ENCODE measurements at regions of chr12 and their contacts with region 1.

Region 1: GRCh38 chr12:46268590-46269558 is at the start of gene SLC38A1:
- DNase-seq: peak; percentile 93
- ATAC-seq: peak; percentile 73
- H3K4me3 Mint-ChIP-seq: no peak within 1 kb of the TSS
- H3K27ac Mint-ChIP-seq: no peak within 1 kb of the TSS
- H3K4me1 Mint-ChIP-seq: peaks cover 31% of the 10 kb centered on the region
- H3K27me3 Mint-ChIP-seq: no peaks in the 10 kb centered on the region
- total RNA-seq, gene SLC38A1: 162 to 168 TPM

Region 2: GRCh38 chr12:45990468-45991283 is 278.2 kb before region 1 on chr12 and contains the start of gene SCAF11:
- CTCF ChIA-PET with region 1: interaction called, 3 read pairs
- POLR2A ChIA-PET with region 1: interaction called, 39 read pairs
- DNase-seq: peak; percentile 100
- ATAC-seq: peak; percentile 83
- H3K4me3 Mint-ChIP-seq: peak within 1 kb of the TSS; percentile 95
- H3K27ac Mint-ChIP-seq: peak within 1 kb of the TSS; percentile 99
- H3K4me1 Mint-ChIP-seq: peaks cover 46% of the 10 kb centered on the region
- H3K27me3 Mint-ChIP-seq: peaks cover 5% of the 10 kb centered on the region
- total RNA-seq, gene SCAF11: 131 to 134 TPM

Region 3: DNA sequence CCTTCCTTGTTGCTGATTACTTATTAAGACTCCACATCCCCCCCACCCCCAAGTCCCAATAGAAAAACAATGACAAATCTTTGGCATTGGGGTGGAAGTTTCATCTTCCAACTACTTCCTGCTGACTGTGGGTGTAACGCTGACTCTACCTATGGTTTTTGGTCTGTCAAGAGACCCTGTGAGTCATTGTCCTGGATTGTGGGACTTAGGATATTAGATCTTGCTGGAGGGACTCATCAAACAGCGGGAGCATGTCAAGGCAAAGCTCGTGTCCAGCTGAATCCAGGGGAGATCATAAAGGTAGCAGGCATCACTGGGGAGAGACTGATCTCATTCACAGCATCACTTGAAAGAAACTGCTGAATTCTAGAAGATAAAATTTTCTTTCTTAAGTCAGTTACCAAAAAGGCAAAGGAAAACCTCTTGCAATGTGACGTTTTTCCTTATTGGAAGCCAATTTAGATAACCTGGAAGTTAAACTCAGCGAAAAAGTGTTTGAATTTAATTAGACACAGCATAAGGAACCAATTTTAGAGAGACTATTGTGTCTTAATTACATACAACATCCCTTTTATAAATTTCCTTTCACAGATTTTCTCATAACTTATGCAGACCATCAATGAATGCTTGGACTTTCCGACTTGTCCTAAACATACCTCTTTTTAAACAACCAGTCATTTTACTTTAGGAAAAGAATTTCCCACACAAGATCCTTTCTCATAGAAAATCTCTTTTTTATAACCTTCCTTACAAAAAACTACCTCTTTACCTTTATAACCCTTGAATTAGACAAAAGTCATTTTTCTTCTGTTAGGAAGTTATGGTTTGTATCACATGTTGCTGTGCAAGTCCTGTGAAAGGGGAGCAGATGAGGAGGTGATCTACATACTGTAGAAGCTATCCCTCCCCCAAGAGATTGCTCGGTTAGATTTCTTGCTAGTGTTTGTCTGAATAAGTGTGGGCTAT is 183.9 kb before region 1 on chr12:
- CTCF ChIA-PET with region 1: no interaction called
- POLR2A ChIA-PET with region 1: no interaction called
- DNase-seq: no peak
- ATAC-seq: no peak
- H3K4me3 Mint-ChIP-seq: no peak overlapping the region
- H3K27ac Mint-ChIP-seq: no peak overlapping the region
- H3K4me1 Mint-ChIP-seq: no peaks in the 10 kb centered on the region
- H3K27me3 Mint-ChIP-seq: peaks cover 7% of the 10 kb centered on the region

Region 4: GRCh38 chr12:46209914-46210872 is 58.7 kb before region 1 on chr12:
- CTCF ChIA-PET with region 1: interaction called, 31 read pairs
- POLR2A ChIA-PET with region 1: interaction called, 345 read pairs
- DNase-seq: peak; percentile 48
- ATAC-seq: peak; percentile 42
- H3K4me3 Mint-ChIP-seq: peak overlapping the region; percentile 34
- H3K27ac Mint-ChIP-seq: peak overlapping the region; percentile 87
- H3K4me1 Mint-ChIP-seq: peaks cover 77% of the 10 kb centered on the region
- H3K27me3 Mint-ChIP-seq: no peaks in the 10 kb centered on the region

Region 5: GRCh38 chr12:46224386-46224785 is 44.5 kb before region 1 on chr12:
- CTCF ChIA-PET with region 1: interaction called, 3 read pairs
- POLR2A ChIA-PET with region 1: interaction called, 345 read pairs
- DNase-seq: no peak
- ATAC-seq: no peak
- H3K4me3 Mint-ChIP-seq: no peak overlapping the region
- H3K27ac Mint-ChIP-seq: peak overlapping the region; percentile 71
- H3K4me1 Mint-ChIP-seq: peaks cover 78% of the 10 kb centered on the region
- H3K27me3 Mint-ChIP-seq: no peaks in the 10 kb centered on the region

Region 6: DNA sequence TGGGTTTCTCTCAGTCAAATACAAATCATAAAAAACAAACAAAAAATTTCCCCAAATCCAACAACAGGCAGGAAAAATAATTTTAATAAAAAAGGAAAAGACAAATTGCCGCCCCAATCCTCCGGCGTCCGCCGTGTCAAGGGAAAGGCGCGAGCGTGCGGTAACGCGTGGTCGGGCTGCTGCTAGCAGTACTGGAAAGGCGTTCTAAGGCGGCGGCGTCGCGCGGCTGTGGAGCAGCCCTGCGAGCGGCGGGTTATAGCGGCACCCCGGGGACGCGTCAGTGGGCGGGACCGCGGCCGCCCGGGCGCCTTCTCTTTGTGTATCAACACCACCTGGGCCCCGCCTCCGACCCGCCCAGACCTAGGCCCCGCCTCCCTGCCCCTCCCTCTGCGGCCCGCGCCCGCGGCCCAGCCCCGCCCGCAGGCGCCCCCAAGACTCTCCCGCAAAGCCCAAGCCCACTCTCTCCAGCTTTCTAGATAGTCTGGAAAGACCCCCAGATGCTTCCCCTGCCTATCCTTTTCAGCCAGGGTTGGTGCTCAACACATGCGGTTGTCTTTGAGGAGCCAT is 103.8 kb after region 1 on chr12 and contains the start of gene SLC38A2:
- CTCF ChIA-PET with region 1: interaction called, 8 read pairs
- POLR2A ChIA-PET with region 1: interaction called, 17 read pairs
- DNase-seq: peak; percentile 97
- ATAC-seq: peak; percentile 84
- H3K4me3 Mint-ChIP-seq: peak within 1 kb of the TSS; percentile 89
- H3K27ac Mint-ChIP-seq: peak within 1 kb of the TSS; percentile 96
- H3K4me1 Mint-ChIP-seq: peaks cover 48% of the 10 kb centered on the region
- H3K27me3 Mint-ChIP-seq: peaks cover 2% of the 10 kb centered on the region
- total RNA-seq, gene SLC38A2: 194 to 200 TPM

Region 7: GRCh38 chr12:46647034-46647433 is 378.2 kb after region 1 on chr12:
- CTCF ChIA-PET with region 1: no interaction called
- POLR2A ChIA-PET with region 1: no interaction called
- DNase-seq: no peak
- ATAC-seq: no peak
- H3K4me3 Mint-ChIP-seq: no peak overlapping the region
- H3K27ac Mint-ChIP-seq: no peak overlapping the region
- H3K4me1 Mint-ChIP-seq: no peaks in the 10 kb centered on the region
- H3K27me3 Mint-ChIP-seq: no peaks in the 10 kb centered on the region

Region 8: DNA sequence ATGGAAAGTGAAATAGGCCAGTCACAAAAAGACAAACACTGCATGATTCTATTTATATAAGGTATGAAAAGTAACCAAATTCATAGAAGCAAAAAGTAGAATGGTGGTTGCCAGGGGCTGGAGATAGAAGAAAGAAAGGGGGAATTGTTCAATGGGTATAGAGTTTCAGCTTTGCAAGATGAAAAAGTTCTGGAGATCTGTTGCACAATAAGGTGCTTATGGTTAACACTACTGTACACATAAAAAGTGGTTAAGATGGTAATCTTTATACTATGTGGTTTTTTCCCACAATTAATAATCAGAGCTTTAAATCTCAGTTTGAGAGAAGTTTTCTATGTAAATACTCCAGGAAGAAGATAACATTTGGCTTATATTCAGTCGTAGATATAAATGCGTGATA is 483.5 kb after region 1 on chr12:
- CTCF ChIA-PET with region 1: no interaction called
- POLR2A ChIA-PET with region 1: no interaction called
- DNase-seq: no peak
- ATAC-seq: no peak
- H3K4me3 Mint-ChIP-seq: no peak overlapping the region
- H3K27ac Mint-ChIP-seq: no peak overlapping the region
- H3K4me1 Mint-ChIP-seq: no peaks in the 10 kb centered on the region
- H3K27me3 Mint-ChIP-seq: peaks cover 6% of the 10 kb centered on the region